ENCODE measurements at regions of chr3 and their contacts with region 1.

Region 1: DNA sequence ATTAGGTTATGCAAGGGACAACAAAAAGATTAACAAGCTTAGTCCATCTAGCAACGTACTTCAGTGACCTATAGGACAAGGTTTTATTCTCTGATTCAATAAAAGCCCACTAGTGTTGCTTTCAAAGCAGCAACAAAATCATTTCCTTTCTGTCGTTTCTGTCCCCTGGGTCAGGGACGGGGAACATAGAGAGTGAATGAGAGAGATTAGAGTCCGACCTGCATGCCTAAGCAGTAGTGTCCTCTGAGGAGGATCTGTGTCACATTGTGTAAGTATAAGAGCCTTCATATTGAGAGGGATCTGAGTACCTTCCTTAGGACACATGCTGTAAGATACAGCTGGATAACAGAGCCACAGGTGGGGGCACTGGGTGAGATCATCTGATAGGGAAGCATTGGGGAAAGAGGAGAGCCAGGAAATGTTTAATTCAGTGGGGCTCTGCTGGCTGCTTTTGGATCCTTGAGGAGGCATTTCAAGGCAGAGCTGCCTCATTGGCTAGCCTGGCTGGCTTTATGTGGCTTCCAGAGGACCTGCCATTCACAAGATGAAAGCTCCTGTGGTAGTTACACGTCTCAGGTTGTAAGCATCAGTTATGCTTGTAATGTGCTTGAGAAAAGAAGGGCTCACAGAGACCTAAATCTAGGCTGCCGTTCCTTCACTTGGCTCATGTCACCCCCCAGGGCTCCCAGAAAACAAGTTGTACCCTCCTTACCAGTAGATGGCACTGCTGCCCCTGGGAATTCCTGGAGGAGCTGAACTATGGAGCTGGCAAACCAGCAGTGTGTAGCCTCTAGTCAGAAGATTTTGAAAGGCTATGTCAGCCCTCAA is 2.7 kb downstream of the TMEM108 start:
- DNase-seq: peak; percentile 52 to 71
- ATAC-seq: peak; percentile 71 to 77
- H3K4me3 ChIP-seq: peak overlapping the region in 3 of 4 donors; percentile 9 to 26 (median 19)
- H3K27ac ChIP-seq: peak overlapping the region; percentile 50 to 68 (median 55)
- H3K4me1 ChIP-seq: peaks cover 10 to 27% of the 10 kb centered on the region in 2 donors
- H3K27me3 ChIP-seq: no peaks in the 10 kb centered on the region
- CTCF ChIP-seq: peak; percentile 59 to 82 (median 70)
- POLR2A ChIP-seq: no peak

Region 2: DNA sequence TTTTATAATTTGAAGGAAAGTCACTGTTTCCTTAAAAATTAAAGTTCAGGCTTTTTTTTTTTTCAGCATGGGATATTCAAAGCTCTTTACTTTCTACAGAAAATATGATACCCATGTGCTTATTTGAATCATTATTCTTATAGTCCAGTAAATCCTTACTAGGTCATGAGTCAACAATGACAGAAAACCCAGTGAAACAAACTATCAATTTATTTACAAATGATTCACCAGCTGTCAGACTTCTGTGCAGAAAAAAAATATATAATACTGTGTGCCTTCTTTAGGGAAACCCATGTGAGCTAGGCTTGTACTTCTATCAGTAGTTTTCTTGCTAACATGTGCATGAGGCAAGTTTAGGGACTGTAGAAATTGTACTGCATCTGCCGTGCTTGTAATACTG is 722.5 kb before region 1 on chr3:
- in situ Hi-C with region 1: no loop called
- intact Hi-C with region 1: no loop called
- DNase-seq: no peak
- ATAC-seq: no peak
- H3K4me3 ChIP-seq: no peak overlapping the region
- H3K27ac ChIP-seq: no peak overlapping the region
- H3K4me1 ChIP-seq: no peaks in the 10 kb centered on the region
- H3K27me3 ChIP-seq: no peaks in the 10 kb centered on the region
- CTCF ChIP-seq: no peak
- POLR2A ChIP-seq: no peak

Region 3: GRCh38 chr3:132730891-132731580 is 309.9 kb before region 1 on chr3:
- in situ Hi-C with region 1: loop called in 3 of 4 experiments (anchors 25 kb)
- intact Hi-C with region 1: no loop called
- DNase-seq: no peak
- ATAC-seq: peak; percentile 54 to 77
- H3K4me3 ChIP-seq: no peak overlapping the region
- H3K27ac ChIP-seq: no peak overlapping the region
- H3K4me1 ChIP-seq: peaks cover 0 to 5% of the 10 kb centered on the region in 2 donors
- H3K27me3 ChIP-seq: no peaks in the 10 kb centered on the region
- CTCF ChIP-seq: peak in 4 of 5 experiments; percentile 14 to 41 (median 24)
- POLR2A ChIP-seq: no peak

Region 4: DNA sequence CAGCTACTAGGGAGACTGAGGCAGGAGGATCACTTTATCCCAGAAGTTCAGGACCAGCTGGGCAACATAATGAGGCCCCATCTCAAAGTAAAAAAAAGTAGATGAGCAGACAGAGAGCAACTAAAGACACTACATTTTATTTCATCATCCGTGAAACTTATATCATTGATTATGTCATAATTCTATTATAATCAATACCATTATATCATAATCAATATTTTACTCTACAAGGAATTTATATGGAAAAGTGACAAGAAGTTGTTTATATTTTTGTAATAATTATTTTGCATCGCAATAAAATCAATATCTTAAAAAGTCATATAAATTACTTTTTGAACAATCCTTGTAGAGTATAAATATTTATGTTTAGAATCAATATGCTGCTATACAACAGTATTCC is 110.0 kb before region 1 on chr3:
- in situ Hi-C with region 1: no loop called
- intact Hi-C with region 1: no loop called
- DNase-seq: no peak
- ATAC-seq: no peak
- H3K4me3 ChIP-seq: no peak overlapping the region
- H3K27ac ChIP-seq: no peak overlapping the region
- H3K4me1 ChIP-seq: no peaks in the 10 kb centered on the region
- H3K27me3 ChIP-seq: no peaks in the 10 kb centered on the region
- CTCF ChIP-seq: no peak
- POLR2A ChIP-seq: no peak

Region 5: GRCh38 chr3:132981719-132982118 is 59.2 kb before region 1 on chr3:
- in situ Hi-C with region 1: no loop called
- intact Hi-C with region 1: loop called (anchors 2 kb)
- DNase-seq: no peak
- ATAC-seq: no peak
- H3K4me3 ChIP-seq: no peak overlapping the region
- H3K27ac ChIP-seq: peak overlapping the region; percentile 79 to 88 (median 84)
- H3K4me1 ChIP-seq: peaks cover 38 to 39% of the 10 kb centered on the region in 2 donors
- H3K27me3 ChIP-seq: no peaks in the 10 kb centered on the region
- CTCF ChIP-seq: no peak
- POLR2A ChIP-seq: no peak

Region 6: DNA sequence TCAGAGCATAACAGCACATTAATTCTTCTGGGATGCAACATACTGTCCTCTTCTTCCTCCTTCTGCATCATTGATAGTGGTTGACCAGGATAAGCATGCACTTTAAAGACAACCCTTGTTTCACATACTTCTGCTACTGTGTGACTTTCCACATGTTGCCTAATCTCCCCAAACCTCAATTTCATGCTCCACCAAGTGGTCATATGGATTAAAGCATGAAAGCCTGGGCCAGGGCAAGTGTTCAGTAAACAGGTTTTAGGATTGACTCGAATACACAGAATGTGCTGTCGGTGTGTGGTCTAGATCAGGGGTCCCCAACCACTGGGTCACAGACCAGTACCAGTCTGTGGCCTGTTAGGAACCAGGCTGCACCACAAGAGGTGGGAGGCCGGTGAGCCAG is 336.5 kb after region 1 on chr3:
- in situ Hi-C with region 1: loop called (anchors 5 to 25 kb)
- intact Hi-C with region 1: loop called (anchors 2 kb)
- DNase-seq: no peak
- ATAC-seq: peak in 1 of 2 donors; percentile 39
- H3K4me3 ChIP-seq: no peak overlapping the region
- H3K27ac ChIP-seq: no peak overlapping the region
- H3K4me1 ChIP-seq: peaks cover 2 to 6% of the 10 kb centered on the region in 2 donors
- H3K27me3 ChIP-seq: no peaks in the 10 kb centered on the region
- CTCF ChIP-seq: peak in 2 of 5 experiments; percentile 21 to 31
- POLR2A ChIP-seq: no peak

Region 7: GRCh38 chr3:133384331-133385027 is 343.6 kb after region 1 on chr3:
- in situ Hi-C with region 1: loop called (anchors 5 to 25 kb)
- intact Hi-C with region 1: loop called (anchors 1 kb)
- DNase-seq: peak in 1 of 2 donors; percentile 35
- ATAC-seq: peak; percentile 81 to 86
- H3K4me3 ChIP-seq: no peak overlapping the region
- H3K27ac ChIP-seq: no peak overlapping the region
- H3K4me1 ChIP-seq: peaks cover 6 to 23% of the 10 kb centered on the region in 2 donors
- H3K27me3 ChIP-seq: no peaks in the 10 kb centered on the region
- CTCF ChIP-seq: peak; percentile 62 to 89 (median 81)
- POLR2A ChIP-seq: no peak

Region 8: GRCh38 chr3:133426721-133427120 is 385.8 kb after region 1 on chr3:
- in situ Hi-C with region 1: no loop called
- intact Hi-C with region 1: loop called (anchors 1 kb)
- DNase-seq: no peak
- ATAC-seq: no peak
- H3K4me3 ChIP-seq: no peak overlapping the region
- H3K27ac ChIP-seq: no peak overlapping the region
- H3K4me1 ChIP-seq: peaks cover 0 to 3% of the 10 kb centered on the region in 2 donors
- H3K27me3 ChIP-seq: no peaks in the 10 kb centered on the region
- CTCF ChIP-seq: no peak
- POLR2A ChIP-seq: no peak

Region 9: DNA sequence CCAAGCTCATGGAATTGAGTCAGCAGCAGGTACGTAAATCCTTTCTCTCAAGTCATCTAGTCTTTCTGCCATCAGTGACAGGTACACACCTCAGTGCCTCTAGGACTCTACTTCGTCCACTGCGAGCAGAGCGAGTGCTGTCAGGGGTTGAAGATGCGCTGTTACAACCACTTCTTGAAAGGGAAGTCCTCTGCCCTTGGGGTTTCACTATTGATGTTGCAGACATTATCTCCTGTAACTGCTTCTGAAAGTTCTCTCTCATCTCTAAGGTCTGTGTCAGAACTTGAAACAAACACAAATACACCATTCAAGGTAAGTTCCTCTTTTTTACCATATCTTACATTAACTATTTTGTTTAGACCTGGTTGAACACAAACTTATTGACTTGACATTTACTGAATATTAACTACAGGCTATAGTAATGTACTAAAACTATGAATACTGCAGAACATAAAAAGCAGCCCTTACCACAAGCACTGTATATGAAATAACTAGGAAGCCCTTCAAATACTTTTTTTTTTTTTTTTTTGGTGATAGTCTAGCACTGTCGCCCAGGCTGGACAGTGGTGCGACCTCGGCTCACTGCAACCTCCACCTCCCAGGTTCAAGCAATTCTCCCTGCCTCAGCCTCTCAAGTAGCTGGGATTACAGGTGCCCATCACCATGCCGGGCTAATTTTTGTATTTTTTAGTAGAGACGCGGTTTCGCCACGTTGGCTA is 579.3 kb after region 1 on chr3:
- in situ Hi-C with region 1: no loop called
- intact Hi-C with region 1: no loop called
- DNase-seq: no peak
- ATAC-seq: no peak
- H3K4me3 ChIP-seq: no peak overlapping the region
- H3K27ac ChIP-seq: no peak overlapping the region
- H3K4me1 ChIP-seq: no peaks in the 10 kb centered on the region
- H3K27me3 ChIP-seq: no peaks in the 10 kb centered on the region
- CTCF ChIP-seq: no peak
- POLR2A ChIP-seq: no peak

Measured in gastrocnemius medialis (tissue), 4 donors.